ENCODE measurements at regions of chr12 and their contacts with region 1.

Region 1: GRCh38 chr12:6975297-6976027 is 4.7 kb downstream of the EMG1 start:
- DNase-seq: no peak
- CTCF ChIP-seq: no peak

Region 2: GRCh38 chr12:7061138-7061537 is 85.7 kb after region 1 on chr12:
- CTCF ChIA-PET with region 1: no interaction called
- POLR2A ChIA-PET with region 1: interaction called, 11 read pairs
- DNase-seq: no peak
- CTCF ChIP-seq: no peak

Region 3: GRCh38 chr12:7090222-7090998 is 114.9 kb after region 1 on chr12:
- CTCF ChIA-PET with region 1: no interaction called
- POLR2A ChIA-PET with region 1: no interaction called
- DNase-seq: no peak
- CTCF ChIP-seq: no peak